CD4-positive, alpha-beta T cell (primary cell): ENCODE measurements at regions of chr17 and their contacts with region 1.

Region 1: GRCh38 chr17:42248351-42249179 is 27.6 kb downstream of the STAT5B start:
- DNase-seq: peak; percentile 64 to 94 (median 80)
- ATAC-seq: peak; percentile 86
- H3K4me3 ChIP-seq: peak overlapping the region; percentile 42
- H3K4me3 Mint-ChIP-seq: peak overlapping the region; percentile 85
- H3K27ac ChIP-seq: peak overlapping the region; percentile 85 to 86
- H3K27ac Mint-ChIP-seq: peak overlapping the region; percentile 96
- H3K4me1 ChIP-seq: peaks cover 55% of the 10 kb centered on the region
- H3K4me1 Mint-ChIP-seq: peaks cover 66% of the 10 kb centered on the region
- H3K27me3 ChIP-seq: no peaks in the 10 kb centered on the region
- H3K27me3 Mint-ChIP-seq: no peaks in the 10 kb centered on the region
- CTCF ChIP-seq: no peak

Region 2: DNA sequence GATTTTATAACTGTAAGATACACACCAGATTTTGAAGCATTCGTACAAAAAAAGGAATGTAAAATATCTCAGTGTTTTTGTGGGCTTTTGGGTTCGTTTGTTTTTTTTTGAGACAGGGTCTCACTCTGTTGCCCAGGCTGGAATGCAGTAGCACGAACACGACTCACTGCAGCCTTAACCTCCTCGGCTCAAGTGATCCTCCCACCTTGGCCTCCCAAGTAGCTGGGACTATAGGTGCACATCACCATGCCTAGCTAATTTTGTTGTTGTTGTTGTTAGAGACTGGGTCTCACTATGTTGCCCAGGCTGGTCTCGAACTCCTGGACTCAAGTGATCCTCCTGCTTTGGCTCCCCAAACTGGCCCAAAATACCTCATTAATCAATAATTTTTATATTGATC is 11.8 kb after region 1 on chr17:
- CTCF ChIA-PET with region 1: interaction called, 3 read pairs
- POLR2A ChIA-PET with region 1: interaction called, 301 read pairs
- intact Hi-C with region 1: no loop called
- DNase-seq: no peak
- ATAC-seq: no peak
- H3K4me3 ChIP-seq: no peak overlapping the region
- H3K4me3 Mint-ChIP-seq: no peak overlapping the region
- H3K27ac ChIP-seq: no peak overlapping the region
- H3K27ac Mint-ChIP-seq: peak overlapping the region; percentile 62
- H3K4me1 ChIP-seq: peaks cover 34% of the 10 kb centered on the region
- H3K4me1 Mint-ChIP-seq: peaks cover 51% of the 10 kb centered on the region
- H3K27me3 ChIP-seq: no peaks in the 10 kb centered on the region
- H3K27me3 Mint-ChIP-seq: no peaks in the 10 kb centered on the region
- CTCF ChIP-seq: no peak

Region 3: DNA sequence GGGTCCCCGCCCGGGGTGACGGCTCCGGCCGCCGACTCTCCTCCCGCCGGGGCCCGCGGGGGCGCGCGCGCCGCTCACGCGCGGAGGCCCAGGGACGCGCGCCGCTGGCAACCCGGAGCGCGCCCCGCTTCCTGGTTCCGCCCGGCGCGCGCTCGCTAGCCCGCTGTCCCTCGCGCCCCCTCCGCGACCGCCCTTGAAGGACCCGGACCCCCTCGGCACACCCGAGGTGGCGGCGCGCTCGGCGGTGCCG is 27.7 kb after region 1 on chr17 and contains the start of gene STAT5B:
- CTCF ChIA-PET with region 1: interaction called, 51 read pairs
- POLR2A ChIA-PET with region 1: interaction called, 301 read pairs
- intact Hi-C with region 1: loop called (anchors 1 kb)
- DNase-seq: peak; percentile 33 to 89 (median 63)
- ATAC-seq: peak; percentile 32
- H3K4me3 ChIP-seq: peak within 1 kb of the TSS; percentile 91
- H3K4me3 Mint-ChIP-seq: peak within 1 kb of the TSS; percentile 92
- H3K27ac ChIP-seq: peak within 1 kb of the TSS; percentile 67 to 76
- H3K27ac Mint-ChIP-seq: peak within 1 kb of the TSS; percentile 91
- H3K4me1 ChIP-seq: peaks cover 16% of the 10 kb centered on the region
- H3K4me1 Mint-ChIP-seq: peaks cover 49% of the 10 kb centered on the region
- H3K27me3 ChIP-seq: no peaks in the 10 kb centered on the region
- H3K27me3 Mint-ChIP-seq: no peaks in the 10 kb centered on the region
- CTCF ChIP-seq: no peak
- total RNA-seq, gene STAT5B: 99.4 to 104 TPM

Region 4: DNA sequence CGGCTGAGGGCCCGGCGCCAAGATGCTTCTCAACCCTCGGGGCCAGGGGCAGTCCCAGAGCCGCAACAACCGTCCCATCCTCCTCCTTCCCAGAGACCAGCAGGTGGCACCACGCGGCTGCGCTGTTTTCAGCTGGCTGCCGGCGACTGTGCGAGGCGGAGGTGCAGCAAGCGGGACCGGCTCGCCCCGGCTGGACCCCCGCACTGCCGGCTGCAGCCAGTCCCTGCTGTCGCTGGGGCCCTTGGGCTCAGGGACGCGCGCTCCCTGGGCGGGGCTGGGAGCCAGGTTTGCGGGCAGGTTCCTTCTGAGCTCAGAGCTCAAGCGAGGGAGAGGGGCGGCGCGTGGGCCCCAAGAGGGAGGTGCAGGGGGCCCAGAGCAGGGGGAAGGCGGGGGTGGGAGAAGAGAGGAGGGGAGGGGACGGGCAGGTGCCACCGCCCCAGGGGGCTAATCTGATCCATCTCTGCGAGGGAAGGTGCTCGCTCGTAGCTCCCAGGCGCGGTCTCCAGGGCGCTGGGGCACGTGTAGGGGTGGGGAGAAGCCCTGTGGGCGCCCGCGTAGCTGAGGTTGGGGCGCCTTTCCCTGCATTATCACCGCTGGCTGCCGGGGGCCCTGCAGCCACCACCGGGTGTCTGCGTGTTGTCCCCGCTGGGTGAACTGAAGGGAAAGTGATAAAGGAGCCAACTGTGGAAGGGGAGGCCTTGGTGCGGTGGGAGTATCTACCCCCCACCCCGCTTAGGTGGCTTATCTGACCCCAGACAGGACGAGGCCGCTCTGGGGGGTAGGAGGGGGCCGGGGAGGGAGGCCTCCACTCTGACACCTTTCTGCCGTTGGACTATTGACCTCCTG is 63.9 kb after region 1 on chr17:
- CTCF ChIA-PET with region 1: interaction called, 5 read pairs
- POLR2A ChIA-PET with region 1: interaction called, 59 read pairs
- intact Hi-C with region 1: no loop called
- DNase-seq: peak; percentile 62 to 91 (median 73)
- ATAC-seq: peak; percentile 61
- H3K4me3 ChIP-seq: peak overlapping the region; percentile 40
- H3K4me3 Mint-ChIP-seq: peak overlapping the region; percentile 80
- H3K27ac ChIP-seq: peak overlapping the region; percentile 41 to 64
- H3K27ac Mint-ChIP-seq: peak overlapping the region; percentile 82
- H3K4me1 ChIP-seq: peaks cover 66% of the 10 kb centered on the region
- H3K4me1 Mint-ChIP-seq: peaks cover 82% of the 10 kb centered on the region
- H3K27me3 ChIP-seq: no peaks in the 10 kb centered on the region
- H3K27me3 Mint-ChIP-seq: no peaks in the 10 kb centered on the region
- CTCF ChIP-seq: peak; percentile 59